ENCODE measurements at regions of chr2 and their contacts with region 1.

Region 1: DNA sequence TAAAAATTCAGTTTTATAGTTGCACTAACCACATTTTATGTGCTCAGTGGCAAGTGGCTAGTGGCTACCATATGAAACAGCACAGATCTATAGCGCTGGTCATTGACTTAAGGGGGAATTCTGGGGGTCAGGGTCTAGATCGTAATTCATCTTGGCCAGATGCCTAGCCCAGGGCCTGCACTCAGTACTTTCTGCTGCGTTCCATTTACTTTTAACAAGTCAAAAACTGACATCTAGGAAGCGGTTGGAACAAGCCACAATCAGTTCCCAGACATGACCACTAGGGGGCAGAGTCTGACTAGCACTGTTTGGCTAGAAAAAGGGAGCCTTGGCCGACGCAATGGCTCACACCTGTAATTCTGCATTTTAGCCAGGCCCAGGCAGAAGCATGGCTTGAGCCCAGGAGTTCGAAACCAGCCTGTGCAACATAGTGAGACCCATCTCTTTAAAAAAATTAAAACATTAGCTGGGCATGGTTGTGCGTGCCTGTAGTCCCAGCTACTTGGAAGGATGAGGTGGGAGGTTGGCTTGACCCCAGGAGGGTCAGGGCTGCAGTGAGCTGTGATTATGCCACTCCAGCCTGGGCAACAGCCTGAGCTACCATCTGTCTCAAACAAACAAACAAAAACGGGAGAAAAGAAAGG is 9.0 kb upstream of the TMBIM1 start:
- DNase-seq: peak; percentile 61 to 92 (median 84)
- ATAC-seq: peak; percentile 99
- H3K4me3 ChIP-seq: no peak overlapping the region
- H3K4me3 Mint-ChIP-seq: no peak overlapping the region
- H3K27ac ChIP-seq: no peak overlapping the region
- H3K27ac Mint-ChIP-seq: peak overlapping the region in 8 of 9 donors; percentile 34 to 80 (median 64)
- H3K4me1 ChIP-seq: no peaks in the 10 kb centered on the region
- H3K4me1 Mint-ChIP-seq: peaks cover 3 to 8% (median 7%) of the 10 kb centered on the region in 7 donors
- H3K27me3 ChIP-seq: no peaks in the 10 kb centered on the region
- H3K27me3 Mint-ChIP-seq: peaks cover 0 to 4% (median 0%) of the 10 kb centered on the region in 5 donors

Region 2: GRCh38 chr2:218286570-218287459 is 14.5 kb before region 1 on chr2:
- CTCF ChIA-PET with region 1: interaction called, 15 read pairs
- POLR2A ChIA-PET with region 1: interaction called, 14 read pairs
- intact Hi-C with region 1: loop called in 1 of 2 experiments (anchors 1 kb)
- DNase-seq: peak; percentile 53 to 90 (median 78)
- ATAC-seq: peak; percentile 87
- H3K4me3 ChIP-seq: peak overlapping the region; percentile 66
- H3K4me3 Mint-ChIP-seq: peak overlapping the region; percentile 85 to 97 (median 94)
- H3K27ac ChIP-seq: peak overlapping the region; percentile 93
- H3K27ac Mint-ChIP-seq: peak overlapping the region; percentile 95 to 99 (median 99)
- H3K4me1 ChIP-seq: peaks cover 74 to 77% of the 10 kb centered on the region in 2 donors
- H3K4me1 Mint-ChIP-seq: peaks cover 53 to 87% (median 76%) of the 10 kb centered on the region in 7 donors
- H3K27me3 ChIP-seq: no peaks in the 10 kb centered on the region
- H3K27me3 Mint-ChIP-seq: no peaks in the 10 kb centered on the region

Region 3: DNA sequence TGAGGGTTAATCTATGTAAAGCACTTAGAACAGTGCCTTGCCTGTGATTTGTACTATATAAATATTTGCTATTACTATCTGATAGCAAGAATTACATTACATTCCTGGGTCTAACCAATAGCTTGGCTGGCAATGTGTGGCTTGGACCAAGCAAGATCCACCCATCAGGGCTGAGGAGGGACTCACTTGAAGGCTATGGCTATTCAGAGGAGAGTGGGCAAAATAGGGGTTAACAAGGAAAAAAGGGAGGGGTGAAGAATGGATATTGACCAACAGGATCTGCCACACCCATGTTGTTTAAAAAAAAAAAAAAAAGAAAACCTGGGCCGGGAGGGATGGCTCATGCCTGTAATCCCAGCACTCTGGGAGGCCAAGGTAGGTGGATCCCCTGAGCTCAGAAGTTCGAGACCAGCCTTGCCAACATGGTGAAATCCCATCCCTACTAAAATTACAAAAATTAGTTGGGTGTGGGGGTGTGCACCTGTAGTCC is 11.0 kb after region 1 on chr2:
- CTCF ChIA-PET with region 1: interaction called, 19 read pairs
- POLR2A ChIA-PET with region 1: interaction called, 13 read pairs
- intact Hi-C with region 1: loop called in 1 of 2 experiments (anchors 1 kb)
- DNase-seq: no peak
- ATAC-seq: no peak
- H3K4me3 ChIP-seq: no peak overlapping the region
- H3K4me3 Mint-ChIP-seq: no peak overlapping the region
- H3K27ac ChIP-seq: no peak overlapping the region
- H3K27ac Mint-ChIP-seq: peak overlapping the region in 8 of 9 donors; percentile 36 to 88 (median 67)
- H3K4me1 ChIP-seq: peaks cover 15 to 17% of the 10 kb centered on the region in 2 donors
- H3K4me1 Mint-ChIP-seq: peaks cover 17 to 44% (median 40%) of the 10 kb centered on the region in 7 donors
- H3K27me3 ChIP-seq: no peaks in the 10 kb centered on the region
- H3K27me3 Mint-ChIP-seq: peaks cover 0 to 2% (median 0%) of the 10 kb centered on the region in 5 donors

Region 4: GRCh38 chr2:218322895-218323808 is 21.9 kb after region 1 on chr2:
- CTCF ChIA-PET with region 1: interaction called, 8 read pairs
- POLR2A ChIA-PET with region 1: interaction called, 13 read pairs
- intact Hi-C with region 1: no loop called
- DNase-seq: peak; percentile 15 to 61 (median 44)
- ATAC-seq: peak; percentile 73
- H3K4me3 ChIP-seq: peak overlapping the region; percentile 64
- H3K4me3 Mint-ChIP-seq: peak overlapping the region; percentile 84 to 93 (median 88)
- H3K27ac ChIP-seq: peak overlapping the region; percentile 69
- H3K27ac Mint-ChIP-seq: peak overlapping the region in 8 of 9 donors; percentile 58 to 93 (median 84)
- H3K4me1 ChIP-seq: peaks cover 10 to 50% of the 10 kb centered on the region in 2 donors
- H3K4me1 Mint-ChIP-seq: peaks cover 25 to 78% (median 71%) of the 10 kb centered on the region in 7 donors
- H3K27me3 ChIP-seq: no peaks in the 10 kb centered on the region
- H3K27me3 Mint-ChIP-seq: peaks cover 0 to 31% (median 0%) of the 10 kb centered on the region in 5 donors

Region 5: DNA sequence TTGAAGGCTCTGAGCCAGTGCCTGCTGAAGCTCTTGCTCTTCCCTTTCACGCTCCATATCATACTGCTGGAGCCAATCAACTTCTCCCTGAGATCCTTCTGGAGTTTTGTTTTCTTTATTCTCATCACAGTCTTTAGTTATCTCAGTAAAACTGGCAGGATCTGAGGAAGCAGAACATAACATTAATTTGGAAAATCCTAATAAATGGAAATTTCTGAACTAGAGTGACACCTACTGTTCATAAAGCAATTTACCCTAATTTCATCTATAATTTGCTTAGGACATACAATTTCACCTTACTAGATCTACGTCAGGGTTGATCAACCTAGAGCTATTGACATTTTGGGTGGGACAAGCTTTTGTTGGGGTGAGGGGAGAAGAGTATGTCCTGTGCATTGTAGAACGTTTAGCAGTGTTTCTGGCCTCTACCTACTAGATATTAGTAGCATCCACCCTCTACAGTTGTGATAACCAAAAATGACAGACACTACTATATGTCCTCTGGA is 164.8 kb after region 1 on chr2:
- CTCF ChIA-PET with region 1: interaction called, 6 read pairs
- POLR2A ChIA-PET with region 1: no interaction called
- intact Hi-C with region 1: loop called (anchors 1 kb)
- DNase-seq: peak in 3 of 9 donors; percentile 9 to 24 (median 23)
- ATAC-seq: peak; percentile 45
- H3K4me3 ChIP-seq: no peak overlapping the region
- H3K4me3 Mint-ChIP-seq: no peak overlapping the region
- H3K27ac ChIP-seq: no peak overlapping the region
- H3K27ac Mint-ChIP-seq: peak overlapping the region in 2 of 9 donors; percentile 3 to 62
- H3K4me1 ChIP-seq: peaks cover 0 to 4% of the 10 kb centered on the region in 2 donors
- H3K4me1 Mint-ChIP-seq: peaks cover 5 to 10% (median 9%) of the 10 kb centered on the region in 7 donors
- H3K27me3 ChIP-seq: no peaks in the 10 kb centered on the region
- H3K27me3 Mint-ChIP-seq: no peaks in the 10 kb centered on the region

Region 6: GRCh38 chr2:218648088-218648786 is 346.9 kb after region 1 on chr2:
- CTCF ChIA-PET with region 1: no interaction called
- POLR2A ChIA-PET with region 1: no interaction called
- intact Hi-C with region 1: loop called (anchors 1 to 2 kb)
- DNase-seq: peak; percentile 15 to 55 (median 46)
- ATAC-seq: peak; percentile 91
- H3K4me3 ChIP-seq: no peak overlapping the region
- H3K4me3 Mint-ChIP-seq: peak overlapping the region in 1 of 10 donors; percentile 7
- H3K27ac ChIP-seq: no peak overlapping the region
- H3K27ac Mint-ChIP-seq: peak overlapping the region in 1 of 9 donors; percentile 35
- H3K4me1 ChIP-seq: peaks cover 0 to 7% of the 10 kb centered on the region in 2 donors
- H3K4me1 Mint-ChIP-seq: peaks cover 0 to 14% (median 12%) of the 10 kb centered on the region in 7 donors
- H3K27me3 ChIP-seq: no peaks in the 10 kb centered on the region
- H3K27me3 Mint-ChIP-seq: no peaks in the 10 kb centered on the region